PC-9 (cell line): ENCODE measurements at regions of chr7 and their contacts with region 1.

Region 1: GRCh38 chr7:47435889-47436312 is 146.0 kb downstream of the TNS3 start:
- DNase-seq: peak in 1 of 2 experiments; percentile 60
- H3K4me3 ChIP-seq: no peak overlapping the region
- H3K27ac ChIP-seq: 0 out of 2 replicates have a peak overlapping the region, but pooled peaks have one; percentile 32
- H3K4me1 ChIP-seq: peaks cover 7% of the 10 kb centered on the region
- H3K27me3 ChIP-seq: no peaks in the 10 kb centered on the region
- CTCF ChIP-seq: peak; percentile 59

Region 2: GRCh38 chr7:46616636-46617035 is 819.3 kb before region 1 on chr7:
- CTCF ChIA-PET with region 1: no interaction called
- POLR2A ChIA-PET with region 1: no interaction called
- intact Hi-C with region 1: no loop called
- DNase-seq: peak in 1 of 2 experiments; percentile 39
- H3K4me3 ChIP-seq: no peak overlapping the region
- H3K27ac ChIP-seq: no peak overlapping the region
- H3K4me1 ChIP-seq: no peaks in the 10 kb centered on the region
- H3K27me3 ChIP-seq: no peaks in the 10 kb centered on the region
- CTCF ChIP-seq: no peak

Region 3: GRCh38 chr7:47466894-47467293 is 31.0 kb after region 1 on chr7:
- CTCF ChIA-PET with region 1: interaction called, 10 read pairs
- POLR2A ChIA-PET with region 1: no interaction called
- intact Hi-C with region 1: no loop called
- DNase-seq: no peak
- H3K4me3 ChIP-seq: no peak overlapping the region
- H3K27ac ChIP-seq: no peak overlapping the region
- H3K4me1 ChIP-seq: no peaks in the 10 kb centered on the region
- H3K27me3 ChIP-seq: no peaks in the 10 kb centered on the region
- CTCF ChIP-seq: no peak

Region 4: DNA sequence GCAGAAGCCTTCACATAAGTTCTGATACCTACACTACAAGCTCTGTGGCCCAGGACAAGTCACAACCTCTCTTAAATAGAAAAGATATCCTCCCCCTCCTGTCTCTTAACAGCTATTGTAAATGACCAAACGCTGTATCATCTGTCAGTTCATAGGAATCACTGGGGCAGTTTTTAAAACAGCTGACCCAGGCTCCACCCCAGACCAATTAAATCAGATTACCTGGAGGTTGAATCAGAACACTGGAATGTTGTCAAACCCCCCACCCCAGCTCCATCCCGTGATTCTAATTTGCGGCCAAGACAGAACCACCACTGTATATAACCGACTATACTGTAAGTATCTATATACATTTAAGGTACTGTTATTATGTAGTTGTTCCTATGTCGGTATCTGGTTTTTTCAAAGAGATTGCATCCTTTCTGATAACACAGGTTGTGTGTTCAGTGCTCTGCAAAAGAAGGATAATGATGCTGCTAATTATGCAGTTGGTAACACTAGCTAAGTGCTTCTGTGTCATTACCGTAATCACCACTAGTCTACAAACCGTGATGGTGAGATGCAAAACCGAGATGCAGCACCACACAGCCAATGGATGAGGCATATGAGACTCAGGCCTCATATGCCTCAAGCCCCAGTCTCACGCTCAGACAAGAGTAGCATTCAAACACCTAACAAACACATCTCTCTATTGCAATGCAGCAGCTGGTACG is 98.6 kb after region 1 on chr7:
- CTCF ChIA-PET with region 1: no interaction called
- POLR2A ChIA-PET with region 1: no interaction called
- intact Hi-C with region 1: loop called (anchors 5 kb)
- DNase-seq: peak; percentile 76 to 89
- H3K4me3 ChIP-seq: no peak overlapping the region
- H3K27ac ChIP-seq: peak overlapping the region; percentile 52
- H3K4me1 ChIP-seq: peaks cover 84% of the 10 kb centered on the region
- H3K27me3 ChIP-seq: no peaks in the 10 kb centered on the region
- CTCF ChIP-seq: peak; percentile 62

Region 5: DNA sequence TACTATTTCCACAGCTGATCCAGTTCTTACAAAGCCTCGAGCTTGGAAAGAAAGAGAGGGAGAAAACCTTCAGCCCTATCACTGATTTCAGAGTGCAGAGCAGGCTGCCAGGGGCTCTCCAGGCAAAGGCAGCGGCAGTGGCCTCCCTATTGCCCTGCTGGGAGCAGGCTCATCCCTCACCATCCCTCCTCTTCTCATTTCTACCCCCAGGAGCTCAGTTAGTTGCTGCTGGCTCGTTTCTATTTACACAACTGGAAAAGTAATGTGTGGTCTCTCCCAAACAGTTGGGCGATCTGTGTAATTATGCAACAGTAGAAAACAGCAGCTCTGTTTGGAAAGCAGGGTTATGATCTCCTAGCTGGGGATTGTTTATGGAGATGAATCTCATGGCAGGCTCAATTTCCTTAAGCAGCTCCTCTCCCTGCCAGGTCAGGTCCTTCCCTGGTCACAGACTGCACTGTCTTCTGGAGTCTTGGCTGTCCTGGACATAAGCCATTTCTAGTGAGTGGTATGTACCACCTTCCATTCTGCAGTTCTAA is 174.7 kb after region 1 on chr7:
- CTCF ChIA-PET with region 1: no interaction called
- POLR2A ChIA-PET with region 1: no interaction called
- intact Hi-C with region 1: no loop called
- DNase-seq: no peak
- H3K4me3 ChIP-seq: no peak overlapping the region
- H3K27ac ChIP-seq: no peak overlapping the region
- H3K4me1 ChIP-seq: peaks cover 37% of the 10 kb centered on the region
- H3K27me3 ChIP-seq: no peaks in the 10 kb centered on the region
- CTCF ChIP-seq: no peak

Region 6: DNA sequence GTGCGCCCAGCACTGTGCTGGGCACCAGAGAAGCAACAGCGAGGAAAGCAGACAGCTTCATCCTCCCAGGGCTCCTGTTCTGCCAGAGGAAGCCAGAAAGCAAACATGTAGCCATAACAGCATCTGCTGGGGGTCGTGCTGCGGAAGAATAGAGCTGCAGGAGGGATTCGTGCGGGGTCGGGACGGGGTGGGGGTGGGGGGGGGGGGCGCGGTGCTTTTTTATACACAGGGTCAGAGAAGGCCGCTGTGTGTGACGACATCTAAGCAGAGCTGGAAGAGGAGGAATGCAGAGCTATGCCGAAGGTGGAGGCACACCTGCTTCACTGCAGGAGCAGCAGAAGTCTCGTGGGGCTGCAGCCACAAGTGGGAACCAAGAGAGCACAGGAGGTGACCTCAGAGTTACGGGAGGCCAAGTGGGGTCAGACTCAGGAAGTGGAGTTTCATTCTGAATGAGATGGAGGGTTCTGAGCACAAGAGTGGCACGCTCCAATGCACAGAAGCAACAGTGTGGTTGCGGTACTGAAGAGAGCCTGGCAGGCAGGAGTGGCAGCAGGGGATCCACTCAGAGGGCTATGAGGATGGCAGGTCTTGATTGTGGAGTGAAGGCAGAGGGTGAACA is 501.3 kb after region 1 on chr7:
- CTCF ChIA-PET with region 1: no interaction called
- POLR2A ChIA-PET with region 1: no interaction called
- intact Hi-C with region 1: loop called (anchors 10 kb)
- DNase-seq: no peak
- H3K4me3 ChIP-seq: no peak overlapping the region
- H3K27ac ChIP-seq: no peak overlapping the region
- H3K4me1 ChIP-seq: peaks cover 19% of the 10 kb centered on the region
- H3K27me3 ChIP-seq: no peaks in the 10 kb centered on the region
- CTCF ChIP-seq: no peak

Region 7: GRCh38 chr7:49403844-49404243 is 1967.9 kb after region 1 on chr7:
- CTCF ChIA-PET with region 1: no interaction called
- POLR2A ChIA-PET with region 1: no interaction called
- intact Hi-C with region 1: no loop called
- DNase-seq: no peak
- H3K4me3 ChIP-seq: no peak overlapping the region
- H3K27ac ChIP-seq: no peak overlapping the region
- H3K4me1 ChIP-seq: no peaks in the 10 kb centered on the region
- H3K27me3 ChIP-seq: peaks cover 16% of the 10 kb centered on the region
- CTCF ChIP-seq: no peak